ENCODE measurements at regions of chr1 and their contacts with region 1.

Region 1: DNA sequence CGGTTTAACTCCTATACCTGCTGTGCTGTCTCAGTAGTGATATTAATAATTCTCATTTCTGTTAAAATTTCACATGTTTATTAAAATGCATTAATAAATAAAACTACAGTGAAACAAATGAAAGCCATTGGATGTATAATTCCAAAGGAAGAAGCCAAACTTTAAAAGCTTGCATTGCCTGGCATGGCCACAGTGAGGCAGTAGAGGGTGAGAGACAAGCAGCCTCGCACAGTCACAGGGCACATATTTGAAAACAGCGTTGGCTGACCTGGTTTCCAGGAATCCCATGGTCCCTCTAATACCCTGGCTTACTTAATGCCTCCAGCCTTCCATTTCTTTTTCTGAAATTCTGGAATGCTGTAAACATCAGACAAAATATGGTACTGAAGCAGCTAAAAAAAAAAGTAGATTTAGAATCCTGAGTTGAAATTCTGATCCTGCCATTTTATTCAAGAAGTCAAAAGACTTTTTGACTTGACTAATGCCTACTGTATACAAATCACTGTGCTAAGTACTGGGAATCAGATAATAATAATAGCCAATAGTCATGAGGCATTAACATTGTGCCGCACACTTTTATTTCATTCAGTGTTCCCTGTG is 6.7 kb upstream of the RNASEL start:
- DNase-seq: no peak
- H3K4me3 ChIP-seq: no peak overlapping the region
- H3K27ac ChIP-seq: no peak overlapping the region
- H3K27me3 ChIP-seq: peaks cover 12% of the 10 kb centered on the region
- CTCF ChIP-seq: peak; percentile 91

Region 2: DNA sequence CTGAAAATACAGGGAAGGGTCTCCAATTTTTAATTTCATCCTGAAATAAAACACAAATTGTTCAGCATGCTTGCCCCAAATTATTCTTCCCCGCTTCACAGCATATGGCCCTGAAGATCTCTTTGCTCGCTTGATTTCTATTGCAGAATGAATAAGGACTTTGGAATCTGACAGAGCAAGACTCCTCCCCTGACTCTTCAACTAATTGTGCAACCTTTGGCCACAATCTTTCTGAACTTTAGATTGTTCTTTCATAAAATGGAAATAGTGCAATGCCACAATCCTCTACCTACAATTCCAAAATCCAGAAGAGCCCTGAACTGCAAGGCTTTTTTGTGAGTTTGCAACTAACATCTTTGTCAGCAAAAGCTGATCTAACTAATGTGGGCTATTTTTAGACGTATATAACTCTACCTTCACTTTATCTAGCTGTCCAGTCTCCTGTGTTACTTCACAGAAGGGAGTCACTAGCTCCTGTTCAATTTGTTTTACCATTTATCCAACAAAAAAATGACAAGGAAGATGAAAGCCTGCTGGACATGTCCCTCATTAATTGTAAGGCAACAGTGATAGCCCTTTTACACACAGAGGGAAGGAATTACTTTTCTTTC is 20.1 kb before region 1 on chr1:
- CTCF ChIA-PET with region 1: interaction called, 22 read pairs
- POLR2A ChIA-PET with region 1: no interaction called
- DNase-seq: peak; percentile 7
- H3K4me3 ChIP-seq: no peak overlapping the region
- H3K27ac ChIP-seq: no peak overlapping the region
- H3K27me3 ChIP-seq: no peaks in the 10 kb centered on the region
- CTCF ChIP-seq: no peak

Region 3: GRCh38 chr1:182917378-182917777 is 321.6 kb after region 1 on chr1:
- CTCF ChIA-PET with region 1: no interaction called
- POLR2A ChIA-PET with region 1: no interaction called
- DNase-seq: no peak
- H3K4me3 ChIP-seq: no peak overlapping the region
- H3K27ac ChIP-seq: no peak overlapping the region
- H3K27me3 ChIP-seq: peaks cover 3% of the 10 kb centered on the region
- CTCF ChIP-seq: no peak